ENCODE measurements at regions of chr19 and their contacts with region 1.

Region 1: GRCh38 chr19:38759590-38760003 is 13.7 kb downstream of the LGALS7 start:
- DNase-seq: no peak
- H3K4me3 ChIP-seq: no peak overlapping the region
- H3K27ac ChIP-seq: peak overlapping the region; percentile 83 to 85
- H3K4me1 ChIP-seq: peaks cover 0 to 5% (median 0%) of the 10 kb centered on the region in 3 donors
- H3K27me3 ChIP-seq: no peaks in the 10 kb centered on the region
- CTCF ChIP-seq: no peak

Region 2: GRCh38 chr19:38805180-38805579 is 45.6 kb after region 1 on chr19:
- intact Hi-C with region 1: loop called (anchors 10 kb)
- DNase-seq: peak in 1 of 5 donors; percentile 29
- H3K4me3 ChIP-seq: no peak overlapping the region
- H3K27ac ChIP-seq: no peak overlapping the region
- H3K4me1 ChIP-seq: peaks cover 0 to 2% (median 0%) of the 10 kb centered on the region in 3 donors
- H3K27me3 ChIP-seq: no peaks in the 10 kb centered on the region
- CTCF ChIP-seq: no peak

Region 3: DNA sequence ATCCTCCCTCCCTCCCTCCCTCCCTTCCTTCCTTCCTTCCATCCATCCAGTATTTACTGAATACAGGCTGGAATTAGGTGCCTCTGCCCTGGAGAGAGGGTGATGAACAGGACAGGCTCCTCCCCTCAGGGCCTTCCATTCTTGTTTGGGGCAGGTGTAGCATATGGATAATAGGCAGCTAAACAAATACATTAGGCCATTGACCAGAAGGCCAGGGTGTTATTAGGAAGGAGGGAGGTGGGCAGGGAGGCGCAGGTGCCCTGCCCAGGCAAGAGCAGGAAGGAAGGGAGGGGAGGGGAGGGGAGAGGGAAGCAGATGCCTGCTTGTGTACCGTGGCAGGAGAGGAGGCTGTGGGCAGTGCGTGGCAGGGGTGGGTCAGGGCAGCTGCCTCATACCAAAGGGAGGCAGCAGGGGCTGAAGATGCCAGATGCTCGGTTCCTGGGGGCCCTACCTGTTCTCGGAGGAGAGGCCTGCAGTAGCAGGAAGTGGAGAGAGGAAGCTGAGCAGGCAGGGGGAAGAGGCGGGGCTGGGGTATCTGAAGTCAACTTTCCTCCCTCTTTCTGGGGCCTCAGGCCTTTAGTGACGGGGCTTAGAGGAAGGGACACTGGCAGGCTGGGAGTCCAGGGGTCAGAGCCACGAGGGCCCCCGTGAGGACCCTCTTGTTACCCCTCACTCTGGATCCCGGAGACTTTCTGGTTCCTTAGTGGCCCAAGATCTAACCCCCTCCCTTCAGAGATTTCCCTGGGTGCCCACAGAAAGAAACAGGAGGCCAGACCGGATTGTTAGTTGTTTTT is 118.4 kb after region 1 on chr19 and contains the start of gene RINL:
- intact Hi-C with region 1: no loop called
- DNase-seq: peak in 2 of 5 donors; percentile 33 to 38
- H3K4me3 ChIP-seq: no peak within 1 kb of the TSS
- H3K27ac ChIP-seq: peak within 1 kb of the TSS; percentile 22 to 72
- H3K4me1 ChIP-seq: peaks cover 0 to 4% (median 0%) of the 10 kb centered on the region in 3 donors
- H3K27me3 ChIP-seq: no peaks in the 10 kb centered on the region
- CTCF ChIP-seq: no peak
- total RNA-seq, gene RINL: 13.0 TPM